ENCODE measurements at regions of chr7 and their contacts with region 1.

Region 1: GRCh38 chr7:94004024-94004951 is at the start of gene BET1:
- DNase-seq: peak; percentile 97
- H3K4me3 ChIP-seq: peak within 1 kb of the TSS; percentile 49 to 87 (median 69)
- H3K27ac ChIP-seq: peak within 1 kb of the TSS; percentile 68 to 94 (median 92)
- H3K4me1 ChIP-seq: peaks cover 8 to 55% (median 38%) of the 10 kb centered on the region in 6 donors
- H3K27me3 ChIP-seq: peaks cover 0 to 9% (median 0%) of the 10 kb centered on the region in 7 donors
- CTCF ChIP-seq: no peak
- POLR2A ChIP-seq: peak in 2 of 3 donors; percentile 41 to 53
- total RNA-seq, gene BET1: 24.5 to 36.0 (median 26.8) TPM

Region 2: GRCh38 chr7:93921607-93922566 is 82.4 kb before region 1 on chr7 and contains the start of gene GNG11:
- intact Hi-C with region 1: loop called (anchors 10 kb)
- DNase-seq: peak; percentile 90
- H3K4me3 ChIP-seq: peak within 1 kb of the TSS; percentile 30 to 71 (median 46)
- H3K27ac ChIP-seq: peak within 1 kb of the TSS; percentile 55 to 90 (median 87)
- H3K4me1 ChIP-seq: peaks cover 0 to 28% (median 2%) of the 10 kb centered on the region in 6 donors
- H3K27me3 ChIP-seq: peaks cover 0 to 21% (median 0%) of the 10 kb centered on the region in 7 donors
- CTCF ChIP-seq: no peak
- POLR2A ChIP-seq: no peak
- total RNA-seq, gene GNG11: 15.5 to 46.6 (median 32.2) TPM

Region 3: GRCh38 chr7:94250985-94251384 is 246.7 kb after region 1 on chr7:
- intact Hi-C with region 1: no loop called
- DNase-seq: no peak
- H3K4me3 ChIP-seq: no peak overlapping the region
- H3K27ac ChIP-seq: no peak overlapping the region
- H3K4me1 ChIP-seq: no peaks in the 10 kb centered on the region
- H3K27me3 ChIP-seq: no peaks in the 10 kb centered on the region
- CTCF ChIP-seq: no peak
- POLR2A ChIP-seq: no peak

Measured in spleen (tissue), 13 donors.